ENCODE measurements at regions of chr14 and their contacts with region 1.

Region 1: DNA sequence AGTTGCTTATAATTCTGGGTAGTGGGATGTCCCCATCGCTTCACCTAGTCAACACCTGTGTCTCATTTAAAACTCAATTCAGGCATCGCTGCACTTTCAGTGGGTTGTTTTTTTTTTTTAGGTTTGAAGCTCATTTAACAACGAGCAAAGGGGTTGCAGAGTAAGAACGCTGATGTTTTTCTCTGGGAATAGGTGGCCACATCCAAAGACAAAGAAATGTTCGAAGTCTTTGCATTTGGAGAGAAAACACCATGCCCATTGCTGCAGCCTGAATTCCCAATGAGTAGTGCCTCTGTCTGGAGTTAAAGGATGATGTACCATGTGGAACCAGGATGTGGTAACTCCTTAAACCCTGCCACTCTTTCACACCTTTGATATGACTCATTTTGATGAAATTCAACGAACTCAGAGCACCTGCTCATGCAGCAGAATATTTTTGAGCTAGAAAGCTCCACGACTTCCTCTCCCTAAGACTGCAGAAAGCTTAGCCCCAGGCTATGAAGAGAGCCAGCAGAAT is 35.1 kb upstream of the BATF start:
- DNase-seq: no peak
- ATAC-seq: no peak
- H3K4me3 ChIP-seq: no peak overlapping the region
- H3K27ac ChIP-seq: no peak overlapping the region
- H3K4me1 ChIP-seq: peaks cover 0 to 9% (median 0%) of the 10 kb centered on the region in 9 donors
- H3K27me3 ChIP-seq: no peaks in the 10 kb centered on the region
- CTCF ChIP-seq: no peak

Region 2: GRCh38 chr14:75126679-75127473 is 360.3 kb before region 1 on chr14 and contains the start of gene NEK9:
- intact Hi-C with region 1: loop called in 7 of 10 experiments (anchors 5 to 10 kb)
- DNase-seq: peak; percentile 91 to 94
- ATAC-seq: peak; percentile 95 to 98 (median 96)
- H3K4me3 ChIP-seq: peak within 1 kb of the TSS; percentile 63 to 96 (median 84)
- H3K27ac ChIP-seq: peak within 1 kb of the TSS; percentile 90 to 99 (median 96)
- H3K4me1 ChIP-seq: peaks cover 0 to 54% (median 41%) of the 10 kb centered on the region in 9 donors
- H3K27me3 ChIP-seq: no peaks in the 10 kb centered on the region
- CTCF ChIP-seq: peak in 1 of 9 donors; percentile 13
- total RNA-seq, gene NEK9: 97.8 to 138 (median 115) TPM

Region 3: GRCh38 chr14:75132382-75133086 is 354.7 kb before region 1 on chr14:
- intact Hi-C with region 1: loop called in 7 of 10 experiments (anchors 5 to 10 kb)
- DNase-seq: peak in 1 of 2 donors; percentile 73
- ATAC-seq: peak; percentile 50 to 83 (median 76)
- H3K4me3 ChIP-seq: no peak overlapping the region
- H3K27ac ChIP-seq: peak overlapping the region in 4 of 10 donors; percentile 6 to 67 (median 26)
- H3K4me1 ChIP-seq: peaks cover 0 to 22% (median 15%) of the 10 kb centered on the region in 9 donors
- H3K27me3 ChIP-seq: no peaks in the 10 kb centered on the region
- CTCF ChIP-seq: peak; percentile 58 to 82 (median 74)

Region 4: DNA sequence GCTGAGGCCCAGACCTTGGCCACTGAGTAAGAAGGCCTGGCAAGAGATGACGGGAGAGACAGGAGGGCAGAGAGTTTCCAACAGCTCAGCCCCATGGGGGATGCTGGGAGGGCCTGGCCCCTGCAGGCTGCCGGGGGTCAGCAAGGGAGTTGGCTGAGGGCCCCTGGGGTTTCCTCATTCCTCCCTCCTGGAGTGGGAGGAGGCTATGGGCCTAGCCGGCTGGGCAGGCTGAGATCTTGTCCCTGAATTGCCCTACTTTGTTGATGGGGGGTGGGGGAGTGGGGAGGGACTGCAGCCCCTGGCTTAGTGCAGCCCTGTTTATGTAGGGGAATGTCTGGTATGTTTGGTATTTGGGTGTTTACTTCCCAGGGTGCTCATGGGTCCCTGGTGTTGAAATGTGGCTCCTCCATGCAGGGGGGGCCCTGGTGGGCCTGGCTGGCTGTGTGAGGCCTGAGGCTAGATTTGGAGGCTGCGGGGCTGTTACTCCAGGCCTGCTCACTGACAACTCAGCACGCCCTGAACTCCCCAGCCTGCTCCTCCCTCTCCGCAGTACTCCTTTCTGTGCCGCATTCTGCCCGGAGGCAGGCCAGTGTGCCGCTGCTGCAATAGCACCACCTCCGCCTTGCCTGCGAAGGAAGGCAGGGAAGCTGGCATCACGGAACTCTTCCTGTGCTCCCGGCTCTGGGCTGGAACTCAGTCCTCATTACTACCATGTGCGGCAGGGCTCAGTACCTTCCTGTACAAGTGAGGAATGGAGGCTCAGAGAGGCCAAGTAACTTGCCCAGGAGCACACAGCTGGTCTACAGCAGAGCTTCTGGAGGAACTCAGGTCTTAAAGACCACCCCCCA is 34.1 kb before region 1 on chr14:
- intact Hi-C with region 1: loop called in 1 of 10 experiments (anchors 5 kb)
- DNase-seq: peak; percentile 39 to 71
- ATAC-seq: peak; percentile 44 to 60 (median 54)
- H3K4me3 ChIP-seq: no peak overlapping the region
- H3K27ac ChIP-seq: peak overlapping the region; percentile 46 to 82 (median 74)
- H3K4me1 ChIP-seq: peaks cover 35 to 95% (median 80%) of the 10 kb centered on the region in 9 donors
- H3K27me3 ChIP-seq: no peaks in the 10 kb centered on the region
- CTCF ChIP-seq: no peak

Region 5: GRCh38 chr14:75725481-75725880 is 238.3 kb after region 1 on chr14:
- intact Hi-C with region 1: no loop called
- DNase-seq: peak in 1 of 2 donors; percentile 52
- ATAC-seq: peak in 7 of 8 donors; percentile 66 to 86 (median 77)
- H3K4me3 ChIP-seq: no peak overlapping the region
- H3K27ac ChIP-seq: peak overlapping the region in 9 of 10 donors; percentile 15 to 82 (median 68)
- H3K4me1 ChIP-seq: peaks cover 3 to 47% (median 30%) of the 10 kb centered on the region in 9 donors
- H3K27me3 ChIP-seq: no peaks in the 10 kb centered on the region
- CTCF ChIP-seq: no peak

Region 6: GRCh38 chr14:75875958-75876357 is 388.7 kb after region 1 on chr14:
- intact Hi-C with region 1: no loop called
- DNase-seq: no peak
- ATAC-seq: no peak
- H3K4me3 ChIP-seq: no peak overlapping the region
- H3K27ac ChIP-seq: peak overlapping the region in 6 of 10 donors; percentile 48 to 73 (median 56)
- H3K4me1 ChIP-seq: peaks cover 0 to 31% (median 18%) of the 10 kb centered on the region in 9 donors
- H3K27me3 ChIP-seq: no peaks in the 10 kb centered on the region
- CTCF ChIP-seq: no peak

Measured in heart right ventricle (tissue), 16 donors.